ENCODE measurements at regions of chr5 and their contacts with region 1.

Region 1: DNA sequence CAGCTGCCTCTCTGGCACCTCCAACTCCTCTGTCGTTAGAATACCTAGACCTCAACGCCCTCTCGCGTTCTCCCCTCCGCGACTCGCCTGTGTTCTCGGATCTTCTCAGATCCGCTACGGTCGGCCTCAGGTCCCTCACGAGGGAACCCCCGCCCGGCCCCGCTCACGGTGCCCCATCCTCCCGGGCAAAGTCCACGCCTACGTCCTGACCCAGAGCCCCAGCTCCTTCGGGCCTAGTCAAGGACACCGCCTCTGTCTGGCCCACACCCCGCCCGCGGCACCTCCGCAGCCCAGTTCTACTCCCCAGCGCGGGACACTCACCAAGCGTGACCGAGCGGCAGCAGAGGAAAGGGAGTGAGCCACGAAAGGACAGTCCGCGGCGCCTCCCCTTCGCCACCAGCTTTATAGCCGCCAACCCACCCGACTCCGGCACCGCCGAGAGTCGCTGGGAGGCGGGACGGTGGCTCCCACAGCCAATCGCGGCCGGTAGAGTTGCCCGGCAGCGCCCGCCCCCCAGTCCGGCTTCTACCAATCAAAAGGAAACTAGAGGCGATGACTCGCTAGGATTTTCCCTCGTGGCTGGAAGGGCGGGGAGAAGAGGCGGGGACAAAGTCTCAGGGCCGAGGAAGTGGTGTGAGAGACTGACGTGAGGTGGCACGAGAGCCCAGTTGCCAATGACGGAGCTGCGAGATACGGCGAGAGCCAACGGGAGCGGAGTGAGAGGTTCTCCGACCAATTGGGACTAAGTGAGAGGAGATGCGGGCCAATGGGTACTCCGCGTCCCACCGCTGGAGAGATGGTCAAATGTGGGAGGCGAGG is at the start of gene HMGCS1:
- DNase-seq: peak; percentile 98
- ATAC-seq: peak; percentile 97
- H3K4me3 Mint-ChIP-seq: peak within 1 kb of the TSS; percentile 94
- H3K27ac Mint-ChIP-seq: peak within 1 kb of the TSS; percentile 99
- H3K4me1 Mint-ChIP-seq: peaks cover 52% of the 10 kb centered on the region
- H3K27me3 Mint-ChIP-seq: peaks cover 3% of the 10 kb centered on the region; the same call in 1 of the 2 replicates
- CTCF ChIP-seq: no peak
- total RNA-seq, gene HMGCS1: 176 to 199 TPM (median 178 TPM) in 3 replicates

Region 2: GRCh38 chr5:43105369-43106289 is 207.6 kb before region 1 on chr5:
- CTCF ChIA-PET with region 1: interaction called, 10 read pairs
- POLR2A ChIA-PET with region 1: no interaction called
- DNase-seq: peak; percentile 91
- ATAC-seq: peak; percentile 97
- H3K4me3 Mint-ChIP-seq: peak overlapping the region; percentile 45
- H3K27ac Mint-ChIP-seq: no peak overlapping the region
- H3K4me1 Mint-ChIP-seq: peaks cover 10% of the 10 kb centered on the region
- H3K27me3 Mint-ChIP-seq: peaks cover 1% of the 10 kb centered on the region; the same call in 1 of the 2 replicates
- CTCF ChIP-seq: peak; percentile 94

Measured in WTC11 (cell line).